WTC11 (cell line): ENCODE measurements at regions of chr3 and their contacts with region 1.

Region 1: DNA sequence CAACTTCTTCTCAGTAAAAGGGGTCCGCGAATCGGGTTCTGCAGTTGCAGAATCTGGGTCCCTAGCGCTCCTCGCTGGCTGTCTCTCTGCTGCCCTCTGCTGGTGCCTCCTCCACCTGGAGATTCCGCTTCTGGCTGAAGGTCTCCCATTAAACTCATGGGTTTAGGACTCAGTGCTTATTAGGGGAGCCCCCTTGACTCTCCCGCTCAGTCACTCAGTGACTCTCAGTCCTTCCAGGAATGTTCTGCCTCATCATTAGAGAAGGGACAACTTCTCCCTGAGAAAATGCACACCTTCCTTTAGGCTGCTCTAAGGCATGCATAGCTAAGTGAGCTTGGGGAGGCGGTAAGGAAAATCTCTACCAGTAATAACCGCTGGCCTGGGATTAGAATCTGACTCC is 7.1 kb downstream of the CPN2 start:
- DNase-seq: peak; percentile 90
- ATAC-seq: peak; percentile 42
- H3K4me3 Mint-ChIP-seq: no peak overlapping the region
- H3K27ac Mint-ChIP-seq: no peak overlapping the region
- H3K4me1 Mint-ChIP-seq: peaks cover 25% of the 10 kb centered on the region
- H3K27me3 Mint-ChIP-seq: peaks cover 31% of the 10 kb centered on the region
- CTCF ChIP-seq: peak; percentile 88

Region 2: DNA sequence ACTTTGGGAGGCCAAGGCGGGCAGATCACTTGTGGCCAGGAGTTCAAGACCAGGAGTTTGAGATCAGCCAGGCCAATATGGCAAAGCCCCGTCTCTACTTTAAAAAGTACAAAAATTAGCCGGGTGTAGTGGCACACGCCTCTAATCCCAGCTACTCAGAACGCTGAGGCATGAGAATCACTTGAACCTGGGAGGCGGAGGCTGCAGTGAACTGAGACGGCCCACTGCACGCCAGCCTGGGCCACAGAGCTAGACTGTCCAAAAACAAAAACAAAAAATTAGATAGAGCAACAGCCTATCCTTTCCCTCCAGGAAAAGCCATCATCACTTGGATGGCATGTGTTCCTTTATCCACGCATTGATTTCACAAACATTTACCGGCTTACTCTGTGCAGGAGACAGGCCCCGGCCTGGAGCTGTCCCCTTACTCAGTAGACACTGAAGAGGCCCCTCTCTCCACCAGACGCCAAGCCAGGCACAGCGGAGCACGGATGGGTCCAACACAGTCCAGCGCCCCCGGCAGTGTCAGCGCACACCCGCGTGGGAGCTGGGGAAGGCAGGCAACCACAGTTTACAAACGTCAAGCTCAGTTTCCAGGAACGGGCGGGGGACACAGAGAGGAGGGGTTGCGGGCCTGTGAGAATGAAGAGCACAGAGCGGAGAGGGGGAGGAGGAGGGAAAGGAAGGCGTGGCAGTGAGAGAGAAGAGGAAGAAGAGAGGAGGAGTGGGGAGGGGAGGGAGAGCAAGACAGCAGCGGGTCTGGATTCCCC is 52.0 kb after region 1 on chr3:
- CTCF ChIA-PET with region 1: interaction called, 48 read pairs
- POLR2A ChIA-PET with region 1: interaction called, 3 read pairs
- DNase-seq: peak; percentile 45
- ATAC-seq: peak; percentile 66
- H3K4me3 Mint-ChIP-seq: peak overlapping the region; percentile 67
- H3K27ac Mint-ChIP-seq: no peak overlapping the region
- H3K4me1 Mint-ChIP-seq: peaks cover 27% of the 10 kb centered on the region
- H3K27me3 Mint-ChIP-seq: peaks cover 44% of the 10 kb centered on the region
- CTCF ChIP-seq: no peak